BJ (cell line): ENCODE measurements at regions of chr11 and their contacts with region 1.

Region 1: GRCh38 chr11:73393479-73394380 is 17.5 kb downstream of the RELT start:
- DNase-seq: no peak
- H3K4me3 ChIP-seq: no peak overlapping the region
- H3K27me3 ChIP-seq: no peaks in the 10 kb centered on the region
- CTCF ChIP-seq: peak; percentile 88

Region 2: DNA sequence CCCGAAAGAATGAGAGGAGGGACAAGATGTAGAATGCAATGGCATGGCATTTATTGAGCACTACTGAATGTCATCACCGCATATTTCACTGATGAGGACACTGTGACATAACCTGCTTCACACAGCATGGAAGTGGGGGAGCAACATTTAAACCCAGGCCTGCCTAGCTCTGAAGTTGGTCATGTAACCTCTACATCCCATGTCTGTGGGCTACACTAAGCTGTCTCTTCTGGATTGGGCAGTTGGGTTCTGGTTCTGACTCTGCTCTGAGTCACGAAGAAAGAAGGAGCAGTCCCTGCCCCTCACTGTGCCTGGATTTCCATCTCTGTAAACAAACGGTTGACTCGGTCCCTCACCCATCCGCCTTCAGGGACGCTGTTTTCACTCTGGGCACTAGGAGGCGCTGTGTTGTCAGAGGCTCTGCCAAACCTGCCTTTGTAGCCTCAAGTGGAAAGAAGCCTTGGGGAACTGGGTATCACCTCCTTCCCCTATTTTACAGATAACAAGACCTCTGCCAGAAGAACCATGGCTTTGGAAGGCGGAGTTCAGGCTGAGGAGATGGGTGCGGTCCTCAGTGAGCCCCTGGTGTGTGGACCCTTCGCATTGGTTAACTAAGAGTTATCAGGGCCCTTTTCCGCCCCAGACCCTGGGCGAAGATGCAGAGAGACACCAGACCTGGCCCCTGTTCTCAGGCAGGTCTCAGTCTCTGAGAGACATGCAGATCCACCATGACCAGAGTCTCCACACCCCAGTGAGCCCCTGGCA is 98.3 kb before region 1 on chr11:
- CTCF ChIA-PET with region 1: interaction called, 27 read pairs
- POLR2A ChIA-PET with region 1: no interaction called
- DNase-seq: peak; percentile 70
- H3K4me3 ChIP-seq: no peak overlapping the region
- H3K27me3 ChIP-seq: no peaks in the 10 kb centered on the region
- CTCF ChIP-seq: peak; percentile 98

Region 3: GRCh38 chr11:73335204-73335923 is 58.4 kb before region 1 on chr11:
- CTCF ChIA-PET with region 1: interaction called, 18 read pairs
- POLR2A ChIA-PET with region 1: no interaction called
- DNase-seq: no peak
- H3K4me3 ChIP-seq: no peak overlapping the region
- H3K27me3 ChIP-seq: no peaks in the 10 kb centered on the region
- CTCF ChIP-seq: peak; percentile 98

Region 4: DNA sequence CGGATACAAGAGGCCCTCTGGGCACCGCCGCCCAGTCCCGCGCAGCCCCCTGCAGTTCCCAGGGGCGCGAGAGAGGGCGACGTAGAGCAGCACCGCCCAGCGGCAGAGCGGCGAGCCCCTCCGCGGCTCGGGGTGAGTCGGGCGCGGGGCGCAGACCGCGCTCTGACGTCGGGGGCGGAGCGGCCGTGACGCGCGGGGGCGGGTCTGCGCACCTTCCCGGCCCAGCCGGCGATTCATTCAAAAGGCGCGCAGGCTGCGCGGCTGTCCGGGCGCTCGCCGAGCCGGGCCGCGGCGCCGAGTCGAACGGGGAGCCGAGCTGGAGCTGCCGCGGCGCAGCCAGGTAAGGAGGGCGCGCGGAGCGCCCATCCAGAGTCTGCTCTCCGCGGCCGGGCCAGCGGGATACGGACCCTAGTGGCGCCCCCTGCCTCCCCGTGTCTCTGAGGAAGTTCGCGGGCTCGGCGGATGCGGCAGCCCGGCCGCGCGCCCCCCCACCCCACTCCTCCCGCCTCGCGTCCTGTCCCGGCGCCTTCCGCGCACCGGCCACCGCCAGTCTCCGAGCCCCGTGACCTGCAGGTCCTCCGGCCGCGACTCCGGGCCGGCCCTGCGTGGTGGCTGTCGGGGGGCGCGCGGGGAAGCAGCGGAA is 17.4 kb before region 1 on chr11 and contains the start of gene RELT:
- CTCF ChIA-PET with region 1: interaction called, 15 read pairs
- POLR2A ChIA-PET with region 1: no interaction called
- DNase-seq: peak; percentile 34
- H3K4me3 ChIP-seq: peak within 1 kb of the TSS; percentile 70
- H3K27me3 ChIP-seq: no peaks in the 10 kb centered on the region
- CTCF ChIP-seq: peak; percentile 80
- polyA plus RNA-seq, gene RELT: 2.4 and 3.7 TPM in 2 replicates

Region 5: GRCh38 chr11:73383249-73384124 is 10.2 kb before region 1 on chr11:
- CTCF ChIA-PET with region 1: interaction called, 15 read pairs
- POLR2A ChIA-PET with region 1: no interaction called
- DNase-seq: no peak
- H3K4me3 ChIP-seq: no peak overlapping the region
- H3K27me3 ChIP-seq: no peaks in the 10 kb centered on the region
- CTCF ChIP-seq: no peak

Region 6: GRCh38 chr11:73404048-73404447 is 10.3 kb after region 1 on chr11:
- CTCF ChIA-PET with region 1: interaction called, 21 read pairs
- POLR2A ChIA-PET with region 1: no interaction called
- DNase-seq: no peak
- H3K4me3 ChIP-seq: no peak overlapping the region
- H3K27me3 ChIP-seq: no peaks in the 10 kb centered on the region
- CTCF ChIP-seq: peak; percentile 76